ENCODE measurements at regions of chr6 and their contacts with region 1.

Region 1: GRCh38 chr6:71383901-71384489 is 95.4 kb downstream of the OGFRL1 start:
- DNase-seq: no peak
- H3K4me3 ChIP-seq: no peak overlapping the region
- H3K27ac ChIP-seq: peak overlapping the region; percentile 32
- H3K4me1 ChIP-seq: peaks cover 71% of the 10 kb centered on the region
- H3K27me3 ChIP-seq: no peaks in the 10 kb centered on the region
- CTCF ChIP-seq: peak; percentile 72

Region 2: DNA sequence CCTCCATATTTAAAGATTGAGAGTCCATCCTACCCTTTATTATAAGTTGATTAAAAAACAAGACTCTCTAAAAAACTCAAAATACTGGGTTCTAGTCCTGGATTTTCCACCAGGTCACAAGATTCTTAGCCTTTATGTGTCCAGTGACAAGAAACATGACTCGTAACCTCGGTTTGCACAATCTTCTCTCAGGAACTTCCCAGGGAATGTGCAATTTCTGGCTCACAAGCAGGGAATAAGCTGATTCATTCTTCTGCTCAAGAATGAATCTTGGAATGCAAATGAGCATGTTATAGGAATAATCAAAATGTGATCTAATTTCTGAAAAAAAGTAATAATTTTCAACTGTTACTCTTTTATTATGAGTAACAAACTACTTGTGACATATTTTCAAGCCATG is 50.3 kb before region 1 on chr6:
- intact Hi-C with region 1: no loop called
- DNase-seq: no peak
- H3K4me3 ChIP-seq: no peak overlapping the region
- H3K27ac ChIP-seq: no peak overlapping the region
- H3K4me1 ChIP-seq: peaks cover 21% of the 10 kb centered on the region
- H3K27me3 ChIP-seq: no peaks in the 10 kb centered on the region
- CTCF ChIP-seq: no peak

Region 3: GRCh38 chr6:71510057-71510713 is 126.2 kb after region 1 on chr6:
- intact Hi-C with region 1: loop called (anchors 10 kb)
- DNase-seq: peak; percentile 28
- H3K4me3 ChIP-seq: no peak overlapping the region
- H3K27ac ChIP-seq: peak overlapping the region; percentile 17
- H3K4me1 ChIP-seq: peaks cover 19% of the 10 kb centered on the region
- H3K27me3 ChIP-seq: no peaks in the 10 kb centered on the region
- CTCF ChIP-seq: peak; percentile 75

Region 4: DNA sequence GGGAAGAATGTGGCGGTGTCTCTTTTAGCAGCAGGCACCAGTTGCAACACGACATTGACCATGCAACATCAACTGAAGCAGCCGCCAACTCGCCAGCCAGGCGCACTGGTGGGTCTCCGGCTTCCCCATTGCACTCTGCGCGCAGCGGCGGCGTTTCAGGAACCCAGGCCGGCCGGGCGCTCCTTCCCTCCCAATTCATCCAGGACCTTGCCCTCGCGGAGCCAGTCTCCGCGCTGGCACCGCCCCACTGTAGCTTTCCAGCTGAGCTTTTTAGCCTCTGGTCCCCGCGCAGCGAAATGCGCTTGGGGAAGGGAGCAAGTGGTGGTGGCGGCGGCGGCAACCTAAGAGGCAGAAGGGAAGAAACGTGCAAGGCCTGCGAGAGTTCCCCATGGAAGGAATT is 204.5 kb after region 1 on chr6:
- intact Hi-C with region 1: no loop called
- DNase-seq: no peak
- H3K4me3 ChIP-seq: no peak overlapping the region
- H3K27ac ChIP-seq: no peak overlapping the region
- H3K4me1 ChIP-seq: no peaks in the 10 kb centered on the region
- H3K27me3 ChIP-seq: peaks cover 23% of the 10 kb centered on the region
- CTCF ChIP-seq: no peak